Cardiac septum (tissue), 1 donor: ENCODE measurements at regions of chr5 and their contacts with region 1.

Region 1: GRCh38 chr5:40736103-40736875 is 19.5 kb downstream of the TTC33 start:
- DNase-seq: no peak

Region 2: DNA sequence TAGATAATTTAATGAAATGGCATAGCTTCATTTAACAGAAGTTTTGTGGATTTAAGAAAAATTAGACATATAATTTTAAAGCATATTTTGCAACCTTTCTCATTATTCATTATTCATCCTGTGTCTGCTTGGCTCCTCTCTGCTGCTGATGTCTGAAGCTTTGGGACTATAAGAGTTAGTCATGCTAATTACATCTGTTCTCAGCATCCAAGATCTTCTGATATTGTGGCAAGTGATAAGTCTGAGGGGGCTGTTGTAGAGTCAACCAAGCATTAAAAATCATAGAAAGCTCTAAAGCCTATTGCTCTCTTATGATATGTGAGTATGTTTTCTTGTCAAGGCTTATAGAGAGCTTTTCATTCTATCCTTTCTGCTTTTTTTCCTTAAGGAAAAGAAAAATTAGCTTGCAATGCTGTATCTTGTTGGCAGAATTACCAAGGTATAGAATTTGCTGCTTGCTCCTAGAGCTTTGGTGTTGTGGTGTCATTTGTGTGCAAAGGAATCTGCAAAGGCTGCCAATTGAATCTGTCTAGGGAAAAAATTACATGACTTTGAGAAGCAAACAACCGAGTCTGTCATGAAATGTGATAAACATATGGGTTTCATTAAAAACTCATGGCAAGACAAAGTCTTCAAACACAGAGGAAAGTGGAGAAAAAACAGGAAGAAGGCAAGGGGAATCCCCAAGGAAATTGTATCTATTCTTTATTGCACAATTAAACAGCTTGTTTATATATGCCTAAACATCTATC is 1155.4 kb before region 1 on chr5:
- intact Hi-C with region 1: loop called (anchors 10 kb)
- DNase-seq: no peak

Region 3: DNA sequence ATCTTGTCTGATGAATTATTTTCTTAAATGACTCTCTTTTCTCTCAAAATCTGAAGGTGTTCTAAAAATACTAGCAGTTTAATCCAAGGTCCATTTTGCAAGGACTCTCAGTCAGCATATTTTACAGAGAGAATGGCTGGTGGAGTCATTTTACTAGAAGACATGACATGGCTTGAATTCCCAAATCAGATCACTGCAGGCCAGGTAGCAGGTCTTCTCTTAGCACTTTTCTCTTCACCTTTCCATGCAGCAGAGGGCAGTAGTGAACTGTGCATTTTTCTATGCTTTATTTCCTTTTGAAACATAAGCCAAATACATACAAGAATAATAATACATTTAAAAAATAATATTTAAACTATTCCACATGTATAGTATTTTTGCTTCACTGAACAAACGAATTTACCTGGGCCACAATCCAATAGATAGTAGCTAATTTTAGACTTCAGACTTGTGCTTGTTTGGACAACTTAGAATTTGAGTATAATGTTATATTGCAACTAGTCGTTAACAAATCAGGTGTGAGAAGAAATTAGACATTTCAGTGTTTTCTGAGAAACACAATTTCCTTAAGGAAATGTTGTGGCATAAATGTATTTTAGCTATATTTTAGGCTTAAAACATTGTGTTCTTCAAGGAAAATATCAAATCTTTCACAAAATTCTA is 1022.1 kb before region 1 on chr5:
- intact Hi-C with region 1: loop called (anchors 10 kb)
- DNase-seq: no peak

Region 4: GRCh38 chr5:39948867-39949468 is 787.3 kb before region 1 on chr5:
- intact Hi-C with region 1: loop called (anchors 5 kb)
- DNase-seq: no peak